A673 (cell line): ENCODE measurements at regions of chr12 and their contacts with region 1.

Region 1: GRCh38 chr12:95805864-95806671 is 15.5 kb upstream of the NTN4 start:
- DNase-seq: no peak
- H3K4me3 ChIP-seq: no peak overlapping the region
- H3K27ac ChIP-seq: no peak overlapping the region
- H3K4me1 ChIP-seq: peaks cover 6% of the 10 kb centered on the region
- H3K27me3 ChIP-seq: no peaks in the 10 kb centered on the region
- CTCF ChIP-seq: no peak

Region 2: GRCh38 chr12:94277426-94278000 is 1528.6 kb before region 1 on chr12:
- CTCF ChIA-PET with region 1: no interaction called
- POLR2A ChIA-PET with region 1: interaction called, 21 read pairs
- intact Hi-C with region 1: no loop called
- DNase-seq: no peak
- H3K4me3 ChIP-seq: no peak overlapping the region
- H3K27ac ChIP-seq: no peak overlapping the region
- H3K4me1 ChIP-seq: no peaks in the 10 kb centered on the region
- H3K27me3 ChIP-seq: peaks cover 9% of the 10 kb centered on the region
- CTCF ChIP-seq: no peak